Endothelial cell of umbilical vein (primary cell): ENCODE measurements at regions of chr3 and their contacts with region 1.

Region 1: DNA sequence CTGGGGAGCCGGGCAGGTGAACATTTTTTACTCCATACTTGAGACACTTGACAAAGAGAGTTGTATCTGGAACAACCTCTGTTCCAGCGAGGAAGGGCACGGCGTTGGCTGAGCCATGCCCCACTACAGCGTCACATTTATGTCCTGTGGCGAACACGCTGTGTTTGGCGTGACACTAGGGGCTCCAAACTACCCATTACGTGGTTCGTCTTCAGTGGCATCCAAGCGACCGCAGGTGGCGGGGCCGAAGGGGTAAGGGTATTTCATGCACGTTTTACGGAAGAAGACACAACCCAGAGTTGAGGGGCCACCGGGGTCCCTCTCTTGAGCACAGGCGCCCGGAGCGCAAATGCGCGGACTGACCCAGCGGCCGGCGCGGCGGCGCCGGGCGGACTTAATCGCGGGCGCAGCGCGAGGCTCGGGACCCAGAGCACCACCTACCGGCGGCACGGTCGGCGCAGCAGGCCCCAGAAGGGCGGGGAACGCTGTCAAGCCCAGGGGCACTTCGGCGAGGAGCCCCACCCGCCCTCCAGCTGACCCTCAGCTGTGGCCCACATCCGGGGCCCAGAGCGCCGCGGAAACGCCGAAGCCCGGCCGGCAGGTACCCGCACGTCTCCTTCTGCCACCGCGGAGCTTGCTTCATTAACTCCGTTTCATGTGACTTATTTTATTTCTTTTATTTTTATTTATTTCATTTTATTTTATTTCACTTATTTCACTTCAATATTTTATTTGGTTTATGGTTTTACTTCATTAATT is 36.4 kb upstream of the TRIM71 start:
- DNase-seq: peak; percentile 80
- H3K4me3 ChIP-seq: peak overlapping the region; percentile 43 to 68 (median 54)
- H3K27ac ChIP-seq: peak overlapping the region; percentile 6
- H3K4me1 ChIP-seq: peaks cover 4% of the 10 kb centered on the region
- H3K27me3 ChIP-seq: no peaks in the 10 kb centered on the region
- CTCF ChIP-seq: peak; percentile 77 to 91
- POLR2A ChIP-seq: no peak

Region 2: GRCh38 chr3:32684800-32685542 is 96.4 kb before region 1 on chr3 and contains the start of gene CNOT10:
- CTCF ChIA-PET with region 1: no interaction called
- POLR2A ChIA-PET with region 1: no interaction called
- dilution Hi-C with region 1: no loop called
- intact Hi-C with region 1: loop called (anchors 2 kb)
- DNase-seq: peak; percentile 95
- H3K4me3 ChIP-seq: peak within 1 kb of the TSS; percentile 63 to 89 (median 87)
- H3K27ac ChIP-seq: peak within 1 kb of the TSS; percentile 84
- H3K4me1 ChIP-seq: peaks cover 19% of the 10 kb centered on the region
- H3K27me3 ChIP-seq: no peaks in the 10 kb centered on the region
- CTCF ChIP-seq: no peak
- POLR2A ChIP-seq: peak; percentile 41
- total RNA-seq, gene CNOT10: 28.6 and 34.2 TPM in 2 replicates

Region 3: DNA sequence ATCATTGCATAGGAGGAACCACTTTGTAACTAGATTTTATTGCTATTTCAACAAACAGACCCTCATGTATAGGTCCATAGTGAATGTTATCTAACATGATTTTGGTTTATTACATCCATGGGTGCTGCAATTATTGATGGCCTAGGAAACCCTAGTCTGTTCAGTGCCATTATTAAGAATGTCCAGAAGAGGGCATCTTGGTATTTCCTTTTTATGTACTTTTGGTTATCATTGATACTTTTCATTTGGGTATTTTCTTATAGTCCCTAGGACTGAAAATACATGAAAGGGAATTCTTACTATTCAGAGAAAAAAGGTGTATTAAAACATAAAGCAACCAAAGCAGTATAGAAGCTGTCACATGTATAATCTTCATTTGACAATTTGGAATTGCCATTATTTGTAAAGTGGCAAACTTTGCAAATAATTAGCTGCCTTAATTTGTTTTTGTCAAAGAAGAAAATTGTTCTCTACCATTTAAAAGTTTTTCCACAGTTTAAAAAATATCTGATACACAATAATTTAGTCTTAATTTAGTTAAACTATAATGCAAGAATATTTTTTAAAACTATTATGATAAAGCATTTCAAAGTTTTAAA is 47.7 kb before region 1 on chr3:
- CTCF ChIA-PET with region 1: interaction called, 14 read pairs
- POLR2A ChIA-PET with region 1: no interaction called
- dilution Hi-C with region 1: no loop called
- intact Hi-C with region 1: loop called (anchors 1 kb)
- DNase-seq: peak; percentile 54
- H3K4me3 ChIP-seq: no peak overlapping the region
- H3K27ac ChIP-seq: no peak overlapping the region
- H3K4me1 ChIP-seq: peaks cover 2% of the 10 kb centered on the region
- H3K27me3 ChIP-seq: no peaks in the 10 kb centered on the region
- CTCF ChIP-seq: peak; percentile 29 to 38
- POLR2A ChIP-seq: no peak

Region 4: GRCh38 chr3:32758375-32758753 is 23.0 kb before region 1 on chr3:
- CTCF ChIA-PET with region 1: interaction called, 10 read pairs
- POLR2A ChIA-PET with region 1: no interaction called
- dilution Hi-C with region 1: no loop called
- intact Hi-C with region 1: no loop called
- DNase-seq: no peak
- H3K4me3 ChIP-seq: no peak overlapping the region
- H3K27ac ChIP-seq: no peak overlapping the region
- H3K4me1 ChIP-seq: no peaks in the 10 kb centered on the region
- H3K27me3 ChIP-seq: no peaks in the 10 kb centered on the region
- CTCF ChIP-seq: no peak
- POLR2A ChIP-seq: no peak

Region 5: GRCh38 chr3:32764481-32764880 is 16.9 kb before region 1 on chr3:
- CTCF ChIA-PET with region 1: interaction called, 11 read pairs
- POLR2A ChIA-PET with region 1: no interaction called
- dilution Hi-C with region 1: no loop called
- intact Hi-C with region 1: no loop called
- DNase-seq: no peak
- H3K4me3 ChIP-seq: no peak overlapping the region
- H3K27ac ChIP-seq: no peak overlapping the region
- H3K4me1 ChIP-seq: no peaks in the 10 kb centered on the region
- H3K27me3 ChIP-seq: no peaks in the 10 kb centered on the region
- CTCF ChIP-seq: no peak
- POLR2A ChIP-seq: no peak

Region 6: DNA sequence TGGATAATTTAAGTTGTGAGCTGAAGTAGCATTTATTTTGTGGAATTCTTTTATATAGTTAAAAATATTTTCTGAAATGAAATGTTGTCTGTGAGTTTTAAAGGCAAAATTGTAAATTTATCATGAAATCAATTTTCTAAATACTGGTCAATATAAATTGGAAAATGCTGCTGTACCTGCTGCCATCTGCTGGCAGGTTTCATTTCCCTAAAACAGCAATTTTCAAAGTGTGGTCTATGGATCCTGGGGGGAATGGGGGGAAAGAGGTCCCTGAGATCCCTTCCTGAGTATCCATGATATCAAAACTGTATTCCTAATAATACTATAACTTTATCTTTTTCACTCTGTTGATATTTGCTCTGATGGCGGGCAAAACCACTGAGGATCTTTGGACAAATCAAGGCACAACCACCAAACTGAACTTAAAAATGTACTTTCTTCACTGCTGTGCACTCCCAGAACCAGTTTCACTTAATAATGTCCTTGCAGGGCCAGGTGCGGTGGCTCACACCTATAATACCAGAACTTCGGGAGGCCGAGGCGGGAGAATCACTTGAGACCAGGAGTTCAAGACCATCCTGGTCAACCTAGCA is 152.9 kb after region 1 on chr3:
- CTCF ChIA-PET with region 1: interaction called, 5 read pairs
- POLR2A ChIA-PET with region 1: no interaction called
- dilution Hi-C with region 1: no loop called
- intact Hi-C with region 1: loop called (anchors 1 kb)
- DNase-seq: peak; percentile 22
- H3K4me3 ChIP-seq: no peak overlapping the region
- H3K27ac ChIP-seq: no peak overlapping the region
- H3K4me1 ChIP-seq: no peaks in the 10 kb centered on the region
- H3K27me3 ChIP-seq: peaks cover 0 to 1% of the 10 kb centered on the region in 2 experiments
- CTCF ChIP-seq: peak; percentile 52 to 61
- POLR2A ChIP-seq: no peak